Activated CD4-positive, alpha-beta T cell treated with anti-CD3 and anti-CD28 coated beads for 36 hours (primary cell): ENCODE measurements at regions of chr12 and their contacts with region 1.

Region 1: DNA sequence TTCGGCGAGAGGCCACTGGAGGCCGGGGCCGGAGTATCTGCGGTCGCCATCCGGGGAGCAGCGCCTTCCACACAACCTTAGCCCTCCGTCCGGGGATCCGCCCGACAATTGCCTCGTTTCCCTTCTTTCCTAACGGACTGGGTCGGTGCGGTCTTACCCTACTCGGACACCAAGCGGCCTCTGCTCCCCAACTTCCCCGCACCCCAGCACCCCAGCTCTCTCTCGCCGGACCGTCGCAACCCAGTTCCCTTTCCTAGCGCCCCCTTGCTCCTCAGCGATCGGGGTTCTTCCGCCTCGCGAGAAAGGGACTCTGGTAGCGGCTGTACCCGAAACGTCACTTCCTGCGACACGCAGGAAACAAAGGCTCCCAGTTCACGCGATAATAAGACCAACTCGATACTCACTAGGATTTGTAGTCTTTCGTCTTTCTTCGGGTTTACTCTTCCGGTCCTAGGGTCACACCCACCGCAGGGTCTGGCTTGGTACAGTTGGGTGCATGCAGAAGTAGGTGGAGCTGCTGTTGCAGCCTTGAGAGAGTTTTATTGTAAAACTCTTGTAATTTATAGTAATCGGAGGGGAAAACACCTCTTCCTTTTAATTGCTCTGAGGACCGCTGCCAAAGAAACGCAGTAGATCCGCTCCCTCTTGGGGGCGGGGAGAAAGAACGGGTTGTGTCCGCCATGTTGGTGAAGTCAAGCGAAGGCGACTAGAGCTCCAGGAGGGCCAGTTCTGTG is at the start of gene ZFC3H1:
- DNase-seq: peak; percentile 93
- ATAC-seq: peak; percentile 87
- H3K4me3 Mint-ChIP-seq: peak within 1 kb of the TSS; percentile 98
- H3K27ac Mint-ChIP-seq: peak within 1 kb of the TSS; percentile 99
- H3K4me1 Mint-ChIP-seq: peaks cover 38% of the 10 kb centered on the region
- H3K27me3 Mint-ChIP-seq: no peaks in the 10 kb centered on the region
- total RNA-seq, gene ZFC3H1: 57.1 to 71.5 TPM

Region 2: DNA sequence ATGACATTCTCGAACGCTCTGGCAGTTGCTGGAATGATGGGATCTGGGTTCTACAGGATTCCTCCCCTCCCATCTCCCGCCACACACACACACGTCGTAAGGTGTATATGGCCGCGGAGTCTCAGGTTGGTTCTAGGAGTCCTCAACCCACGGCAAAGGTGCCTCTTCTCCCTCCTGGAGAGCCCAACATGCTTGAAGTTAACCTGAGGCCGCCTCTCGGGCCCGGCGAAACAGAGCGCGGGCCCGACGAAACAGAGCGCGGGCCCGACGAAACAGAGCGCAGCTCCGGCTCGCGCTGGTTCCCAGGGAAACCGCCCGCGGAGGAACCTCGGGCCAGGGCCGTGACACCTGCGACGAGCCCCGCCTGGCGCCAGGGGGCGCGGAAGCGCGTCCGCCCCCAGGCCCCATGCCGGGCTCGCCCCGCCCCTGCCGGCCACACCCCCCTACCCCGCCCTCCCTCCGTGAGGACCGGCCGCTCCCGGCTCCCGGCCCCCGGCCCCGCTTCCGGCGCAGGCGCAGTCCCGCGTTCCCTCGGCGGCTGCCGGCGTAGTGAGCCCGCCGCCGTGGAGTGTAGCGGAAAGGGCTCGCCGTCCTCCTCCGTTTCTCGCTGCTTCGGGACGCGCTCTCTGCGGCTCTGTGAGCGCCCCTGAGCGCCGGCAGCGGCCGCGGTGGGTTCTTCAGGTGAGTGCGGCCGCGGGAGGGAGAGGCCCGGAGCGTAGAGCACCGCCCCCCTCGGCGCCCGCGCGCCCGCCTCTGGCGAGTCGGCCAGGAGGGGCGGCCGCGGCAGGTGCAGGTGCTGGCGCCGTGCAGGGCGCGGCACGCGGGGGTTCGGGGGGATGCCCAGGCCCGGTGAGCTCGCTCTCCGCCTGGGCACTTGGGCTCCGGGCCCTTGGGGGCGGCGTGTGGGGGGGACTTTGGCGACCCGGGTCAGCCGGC is 1925.1 kb before region 1 on chr12 and contains the start of gene RAB3IP:
- CTCF ChIA-PET with region 1: no interaction called
- POLR2A ChIA-PET with region 1: no interaction called
- intact Hi-C with region 1: loop called in 1 of 2 experiments (anchors 2 kb)
- DNase-seq: peak; percentile 97
- ATAC-seq: peak; percentile 88
- H3K4me3 Mint-ChIP-seq: peak within 1 kb of the TSS; percentile 79
- H3K27ac Mint-ChIP-seq: peak within 1 kb of the TSS; percentile 75
- H3K4me1 Mint-ChIP-seq: peaks cover 26% of the 10 kb centered on the region
- H3K27me3 Mint-ChIP-seq: peaks cover 10% of the 10 kb centered on the region
- total RNA-seq, gene RAB3IP: 30.7 to 39.9 TPM

Region 3: GRCh38 chr12:70365648-70366518 is 1297.8 kb before region 1 on chr12 and contains the start of gene KCNMB4:
- CTCF ChIA-PET with region 1: no interaction called
- POLR2A ChIA-PET with region 1: no interaction called
- intact Hi-C with region 1: loop called in 1 of 2 experiments (anchors 1 kb)
- DNase-seq: peak; percentile 88
- ATAC-seq: peak; percentile 91
- H3K4me3 Mint-ChIP-seq: peak within 1 kb of the TSS; percentile 86
- H3K27ac Mint-ChIP-seq: peak within 1 kb of the TSS; percentile 34
- H3K4me1 Mint-ChIP-seq: peaks cover 17% of the 10 kb centered on the region
- H3K27me3 Mint-ChIP-seq: peaks cover 6% of the 10 kb centered on the region
- total RNA-seq, gene KCNMB4: 0.94 to 2.1 TPM

Region 4: DNA sequence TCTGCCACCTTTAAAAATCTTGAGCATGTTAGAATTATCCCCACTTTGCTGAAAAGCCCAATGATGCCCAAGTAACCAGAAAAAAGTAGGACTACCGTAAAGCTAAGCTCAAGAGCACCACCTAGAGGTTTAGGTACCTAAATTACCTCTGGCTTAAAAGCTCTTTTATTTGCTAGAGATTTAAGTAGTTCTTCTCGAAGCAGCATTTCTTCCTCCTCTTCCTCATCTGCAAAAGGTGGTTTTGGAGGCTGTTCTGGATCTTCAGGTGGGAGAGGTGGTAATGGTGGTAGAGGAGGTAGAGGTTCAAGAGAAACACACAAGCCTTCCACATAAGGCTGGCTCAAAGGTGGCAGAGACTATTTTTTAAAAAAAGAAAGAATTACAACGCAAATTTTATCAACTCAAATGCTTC is 27.0 kb before region 1 on chr12:
- CTCF ChIA-PET with region 1: interaction called, 18 read pairs
- POLR2A ChIA-PET with region 1: interaction called, 5 read pairs
- intact Hi-C with region 1: no loop called
- DNase-seq: no peak
- ATAC-seq: peak; percentile 43
- H3K4me3 Mint-ChIP-seq: no peak overlapping the region
- H3K27ac Mint-ChIP-seq: peak overlapping the region; percentile 73
- H3K4me1 Mint-ChIP-seq: peaks cover 21% of the 10 kb centered on the region
- H3K27me3 Mint-ChIP-seq: no peaks in the 10 kb centered on the region

Region 5: DNA sequence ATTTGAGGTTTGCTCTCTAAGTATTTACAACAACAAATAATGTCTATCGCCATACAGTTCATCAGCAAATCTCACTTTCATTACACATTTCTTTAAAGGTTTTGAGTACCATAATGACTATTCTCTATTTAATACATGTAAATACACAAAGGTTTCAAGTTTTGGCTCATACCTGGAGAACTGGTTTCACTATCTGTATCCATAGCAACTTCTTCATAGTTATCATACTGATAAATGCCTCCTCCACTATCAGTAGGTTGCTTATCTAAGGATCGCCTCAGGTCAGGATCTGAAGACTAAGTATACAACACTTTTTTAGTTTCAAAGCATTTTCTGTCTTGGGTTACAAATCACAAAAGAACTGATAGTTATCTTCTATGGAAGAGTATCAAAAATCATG is 21.5 kb before region 1 on chr12:
- CTCF ChIA-PET with region 1: interaction called, 18 read pairs
- POLR2A ChIA-PET with region 1: interaction called, 6 read pairs
- intact Hi-C with region 1: loop called (anchors 2 kb)
- DNase-seq: no peak
- ATAC-seq: peak; percentile 78
- H3K4me3 Mint-ChIP-seq: no peak overlapping the region
- H3K27ac Mint-ChIP-seq: peak overlapping the region; percentile 65
- H3K4me1 Mint-ChIP-seq: peaks cover 47% of the 10 kb centered on the region
- H3K27me3 Mint-ChIP-seq: no peaks in the 10 kb centered on the region

Region 6: DNA sequence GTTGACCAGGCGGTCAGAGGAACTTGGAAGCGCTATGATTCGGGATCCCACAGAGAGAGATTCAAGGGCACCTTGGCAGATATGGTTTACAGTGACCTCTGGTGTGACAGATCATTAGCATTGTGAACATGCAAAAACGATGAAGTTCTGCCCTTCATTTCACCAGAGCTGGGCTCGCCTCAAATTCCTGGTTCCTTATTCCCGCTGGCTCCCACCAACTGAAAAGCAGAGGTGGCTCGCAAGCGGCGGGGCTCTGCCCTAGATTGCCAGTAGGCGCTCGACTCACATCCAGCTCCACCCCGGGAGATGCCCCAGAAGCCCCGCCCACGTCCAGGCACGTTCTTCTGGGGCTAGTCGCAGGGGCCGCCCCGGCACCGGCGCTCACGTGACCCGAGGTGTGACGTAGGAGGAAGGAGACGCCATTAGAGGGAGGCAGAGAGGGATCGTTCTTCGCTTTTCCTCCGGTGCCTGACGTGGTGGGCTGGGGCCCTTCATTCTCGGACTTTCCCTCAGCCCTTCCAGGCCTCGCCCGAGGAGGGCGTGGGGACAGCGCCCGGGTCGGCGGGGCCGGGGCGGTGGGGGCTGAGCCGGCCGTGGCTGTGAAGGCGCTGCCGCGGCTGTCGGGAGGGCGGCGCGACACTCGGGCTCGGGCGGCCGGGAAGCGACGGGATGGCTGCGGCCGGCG is 90.9 kb after region 1 on chr12 and contains the start of gene RAB21:
- CTCF ChIA-PET with region 1: interaction called, 6 read pairs
- POLR2A ChIA-PET with region 1: interaction called, 32 read pairs
- intact Hi-C with region 1: loop called (anchors 1 kb)
- DNase-seq: peak; percentile 100
- ATAC-seq: peak; percentile 92
- H3K4me3 Mint-ChIP-seq: peak within 1 kb of the TSS; percentile 94
- H3K27ac Mint-ChIP-seq: peak within 1 kb of the TSS; percentile 99
- H3K4me1 Mint-ChIP-seq: peaks cover 35% of the 10 kb centered on the region
- H3K27me3 Mint-ChIP-seq: peaks cover 9% of the 10 kb centered on the region
- total RNA-seq, gene RAB21: 88.9 to 98.9 TPM

Region 7: DNA sequence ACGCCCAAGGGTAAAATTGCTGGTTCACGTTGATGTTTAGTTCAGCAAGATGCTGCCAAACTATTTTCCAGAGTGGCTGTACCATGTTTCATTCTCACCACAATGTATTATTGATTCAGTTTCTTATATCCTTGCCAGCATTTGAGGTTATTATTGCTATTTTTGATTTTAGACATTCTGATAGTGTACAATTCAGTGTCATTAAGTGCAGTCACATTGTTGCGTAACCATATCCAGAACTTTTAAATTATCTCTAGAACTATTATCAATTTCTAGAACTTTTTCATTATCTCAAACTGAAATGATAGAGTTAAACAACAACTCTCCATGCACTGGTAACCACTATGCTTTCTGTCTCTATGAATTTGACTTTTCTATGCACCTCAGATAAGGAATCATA is 165.1 kb after region 1 on chr12:
- CTCF ChIA-PET with region 1: no interaction called
- POLR2A ChIA-PET with region 1: no interaction called
- intact Hi-C with region 1: no loop called
- DNase-seq: no peak
- ATAC-seq: no peak
- H3K4me3 Mint-ChIP-seq: no peak overlapping the region
- H3K27ac Mint-ChIP-seq: no peak overlapping the region
- H3K4me1 Mint-ChIP-seq: no peaks in the 10 kb centered on the region
- H3K27me3 Mint-ChIP-seq: peaks cover 6% of the 10 kb centered on the region

Region 8: GRCh38 chr12:71840231-71840847 is 176.6 kb after region 1 on chr12:
- CTCF ChIA-PET with region 1: interaction called, 3 read pairs
- POLR2A ChIA-PET with region 1: interaction called, 4 read pairs
- intact Hi-C with region 1: loop called (anchors 1 to 2 kb)
- DNase-seq: peak; percentile 16
- ATAC-seq: peak; percentile 28
- H3K4me3 Mint-ChIP-seq: peak overlapping the region; percentile 94
- H3K27ac Mint-ChIP-seq: peak overlapping the region; percentile 95
- H3K4me1 Mint-ChIP-seq: peaks cover 39% of the 10 kb centered on the region
- H3K27me3 Mint-ChIP-seq: no peaks in the 10 kb centered on the region